ENCODE measurements at regions of chr1 and their contacts with region 1.

Region 1: DNA sequence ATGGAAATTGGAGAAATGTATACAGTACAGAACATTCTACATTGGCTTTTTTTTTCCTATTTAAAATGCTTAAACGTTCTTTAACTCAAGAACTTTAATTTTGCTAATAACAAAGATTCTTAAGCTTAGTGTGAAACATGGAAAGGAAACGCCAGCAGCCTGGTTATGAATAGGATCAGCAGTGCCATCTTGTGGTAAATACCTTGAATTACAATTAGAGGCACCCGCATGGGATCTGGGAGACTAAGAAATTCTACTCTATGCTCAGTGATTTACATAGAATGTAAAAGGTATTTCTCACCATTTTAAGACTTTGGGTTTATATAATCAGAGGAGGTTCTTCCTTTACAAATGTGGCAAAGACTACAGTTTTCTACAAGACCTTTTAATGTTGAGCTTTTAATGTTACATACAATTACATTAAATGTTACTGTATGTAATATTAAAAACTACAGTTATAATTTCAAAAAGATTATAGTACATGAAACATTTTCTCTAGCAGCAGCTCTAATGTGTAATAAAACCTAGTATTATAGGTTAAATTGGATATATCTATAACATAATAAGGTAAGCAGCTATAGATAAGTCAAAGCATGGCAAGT is 32.1 kb upstream of the APOBEC4 start:
- DNase-seq: no peak
- ATAC-seq: peak in 3 of 4 donors; percentile 54 to 69 (median 55)
- H3K4me3 ChIP-seq: no peak overlapping the region
- H3K27ac ChIP-seq: no peak overlapping the region
- H3K4me1 ChIP-seq: peaks cover 0 to 25% (median 8%) of the 10 kb centered on the region in 12 donors
- H3K27me3 ChIP-seq: no peaks in the 10 kb centered on the region
- CTCF ChIP-seq: peak; percentile 73 to 89 (median 82)
- POLR2A ChIP-seq: no peak

Region 2: GRCh38 chr1:183655562-183656075 is 29.6 kb before region 1 on chr1:
- intact Hi-C with region 1: loop called in 4 of 10 experiments (anchors 1 to 2 kb)
- DNase-seq: peak; percentile 71 to 81 (median 77)
- ATAC-seq: peak; percentile 52 to 79 (median 74)
- H3K4me3 ChIP-seq: no peak overlapping the region
- H3K27ac ChIP-seq: peak overlapping the region in 1 of 12 donors; percentile 53
- H3K4me1 ChIP-seq: peaks cover 5 to 53% (median 37%) of the 10 kb centered on the region in 12 donors
- H3K27me3 ChIP-seq: no peaks in the 10 kb centered on the region
- CTCF ChIP-seq: peak; percentile 85 to 96 (median 90)
- POLR2A ChIP-seq: no peak

Region 3: GRCh38 chr1:183896466-183897048 is 211.3 kb after region 1 on chr1:
- intact Hi-C with region 1: loop called in 1 of 10 experiments (anchors 10 kb)
- DNase-seq: no peak
- ATAC-seq: peak in 3 of 4 donors; percentile 32 to 42 (median 34)
- H3K4me3 ChIP-seq: no peak overlapping the region
- H3K27ac ChIP-seq: peak overlapping the region in 5 of 12 donors; percentile 0 to 81 (median 15)
- H3K4me1 ChIP-seq: peaks cover 0 to 74% (median 6%) of the 10 kb centered on the region in 12 donors
- H3K27me3 ChIP-seq: no peaks in the 10 kb centered on the region
- CTCF ChIP-seq: no peak
- POLR2A ChIP-seq: no peak

Region 4: GRCh38 chr1:183915625-183916510 is 230.7 kb after region 1 on chr1:
- intact Hi-C with region 1: loop called in 5 of 10 experiments (anchors 10 kb)
- DNase-seq: peak in 4 of 5 donors; percentile 76 to 81 (median 78)
- ATAC-seq: peak; percentile 22 to 85 (median 84)
- H3K4me3 ChIP-seq: no peak overlapping the region
- H3K27ac ChIP-seq: peak overlapping the region in 7 of 12 donors; percentile 31 to 70 (median 44)
- H3K4me1 ChIP-seq: peaks cover 0 to 50% (median 18%) of the 10 kb centered on the region in 12 donors
- H3K27me3 ChIP-seq: no peaks in the 10 kb centered on the region
- CTCF ChIP-seq: peak; percentile 73 to 93 (median 86)
- POLR2A ChIP-seq: no peak